Activated CD4-positive, alpha-beta T cell treated with anti-CD3 and anti-CD28 coated beads for 36 hours (primary cell): ENCODE measurements at regions of chr11 and their contacts with region 1.

Region 1: DNA sequence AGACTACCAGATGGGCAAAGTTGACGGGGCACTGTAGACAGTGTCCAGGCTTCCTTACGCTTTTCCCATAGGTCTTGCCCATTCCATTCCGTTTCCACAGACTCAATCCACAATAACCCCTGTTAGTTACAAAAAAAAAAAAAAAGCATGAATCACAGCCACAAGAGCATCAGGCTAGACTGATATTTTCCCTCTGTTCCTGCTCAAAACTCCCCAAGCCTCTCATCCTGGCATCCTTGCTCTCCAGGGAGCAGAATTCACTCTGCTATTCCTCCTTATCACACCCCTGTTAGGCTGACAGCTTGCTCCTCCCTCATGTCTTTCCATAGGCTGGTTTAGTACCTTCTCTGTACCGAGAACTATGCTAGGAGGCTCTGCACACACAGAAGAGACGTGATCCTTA is 42.2 kb downstream of the TMEM123 start:
- DNase-seq: no peak
- ATAC-seq: no peak
- H3K4me3 Mint-ChIP-seq: no peak overlapping the region
- H3K27ac Mint-ChIP-seq: no peak overlapping the region
- H3K4me1 Mint-ChIP-seq: peaks cover 88% of the 10 kb centered on the region
- H3K27me3 Mint-ChIP-seq: no peaks in the 10 kb centered on the region

Region 2: DNA sequence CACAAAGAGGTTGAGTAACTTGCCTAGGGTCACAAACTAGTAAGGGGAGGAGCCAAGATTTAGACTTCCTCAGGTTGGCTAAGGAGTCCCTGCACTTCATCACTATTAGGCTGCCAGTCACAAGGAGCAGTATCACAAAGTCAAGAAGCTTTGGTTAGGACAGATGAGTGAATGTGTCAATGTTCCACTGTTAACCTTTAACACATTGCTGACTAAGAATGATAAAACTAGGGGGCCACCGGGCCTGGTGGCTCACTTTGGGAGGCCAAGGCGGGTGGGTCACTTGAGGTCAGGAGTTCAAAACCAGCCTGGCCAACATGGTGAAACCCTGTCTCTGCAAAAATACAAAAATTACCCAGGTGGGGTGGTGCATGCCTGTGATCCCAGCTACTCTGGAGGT is 10.2 kb after region 1 on chr11:
- CTCF ChIA-PET with region 1: interaction called, 12 read pairs
- POLR2A ChIA-PET with region 1: no interaction called
- intact Hi-C with region 1: no loop called
- DNase-seq: peak; percentile 59
- ATAC-seq: peak; percentile 73
- H3K4me3 Mint-ChIP-seq: no peak overlapping the region
- H3K27ac Mint-ChIP-seq: peak overlapping the region; percentile 53
- H3K4me1 Mint-ChIP-seq: peaks cover 95% of the 10 kb centered on the region
- H3K27me3 Mint-ChIP-seq: no peaks in the 10 kb centered on the region

Region 3: GRCh38 chr11:102589047-102589459 is 178.7 kb after region 1 on chr11:
- CTCF ChIA-PET with region 1: no interaction called
- POLR2A ChIA-PET with region 1: no interaction called
- intact Hi-C with region 1: no loop called
- DNase-seq: peak; percentile 74
- ATAC-seq: peak; percentile 81
- H3K4me3 Mint-ChIP-seq: no peak overlapping the region
- H3K27ac Mint-ChIP-seq: no peak overlapping the region
- H3K4me1 Mint-ChIP-seq: peaks cover 20% of the 10 kb centered on the region
- H3K27me3 Mint-ChIP-seq: no peaks in the 10 kb centered on the region